ENCODE measurements at regions of chr2 and their contacts with region 1.

Region 1: DNA sequence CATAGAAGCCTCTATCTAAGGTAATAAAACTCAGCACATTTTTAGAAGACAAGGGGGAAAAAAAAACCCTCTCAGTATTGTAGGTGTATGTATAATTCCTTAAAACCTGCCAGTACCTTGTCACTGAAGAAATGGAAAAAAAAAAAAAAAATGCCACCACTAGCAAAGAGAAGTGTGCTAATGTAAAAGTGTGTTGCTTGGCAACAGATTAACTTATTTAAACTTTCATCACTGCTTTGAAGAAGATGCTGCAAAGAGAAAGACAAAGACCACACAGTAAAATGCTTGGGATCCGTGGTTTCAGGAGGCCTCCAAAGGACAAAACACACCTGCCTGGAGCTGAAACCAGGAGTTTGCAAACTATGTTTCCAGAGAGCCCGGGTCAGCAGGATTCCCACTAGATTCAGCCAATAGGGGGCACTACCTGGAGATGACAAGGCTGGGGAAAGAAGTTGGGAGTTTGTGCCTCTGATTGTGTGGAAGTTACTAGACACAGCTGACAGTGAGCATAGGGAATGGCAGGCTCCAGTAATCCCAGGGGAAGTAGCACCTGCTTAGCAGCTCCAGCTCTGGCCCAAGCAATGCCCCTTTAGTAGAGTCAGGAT is 169.1 kb upstream of the TRIB2 start:
- DNase-seq: no peak
- ATAC-seq: no peak
- H3K4me3 Mint-ChIP-seq: no peak overlapping the region
- H3K27ac Mint-ChIP-seq: no peak overlapping the region
- H3K4me1 Mint-ChIP-seq: no peaks in the 10 kb centered on the region
- H3K27me3 Mint-ChIP-seq: no peaks in the 10 kb centered on the region

Region 2: GRCh38 chr2:12534646-12535263 is 12.9 kb before region 1 on chr2:
- CTCF ChIA-PET with region 1: interaction called, 13 read pairs
- POLR2A ChIA-PET with region 1: no interaction called
- DNase-seq: no peak
- ATAC-seq: no peak
- H3K4me3 Mint-ChIP-seq: no peak overlapping the region
- H3K27ac Mint-ChIP-seq: no peak overlapping the region
- H3K4me1 Mint-ChIP-seq: peaks cover 10% of the 10 kb centered on the region
- H3K27me3 Mint-ChIP-seq: peaks cover 8% of the 10 kb centered on the region

Region 3: GRCh38 chr2:12579018-12579417 is 31.4 kb after region 1 on chr2:
- CTCF ChIA-PET with region 1: no interaction called
- POLR2A ChIA-PET with region 1: no interaction called
- DNase-seq: no peak
- ATAC-seq: no peak
- H3K4me3 Mint-ChIP-seq: no peak overlapping the region
- H3K27ac Mint-ChIP-seq: no peak overlapping the region
- H3K4me1 Mint-ChIP-seq: no peaks in the 10 kb centered on the region
- H3K27me3 Mint-ChIP-seq: no peaks in the 10 kb centered on the region

Region 4: DNA sequence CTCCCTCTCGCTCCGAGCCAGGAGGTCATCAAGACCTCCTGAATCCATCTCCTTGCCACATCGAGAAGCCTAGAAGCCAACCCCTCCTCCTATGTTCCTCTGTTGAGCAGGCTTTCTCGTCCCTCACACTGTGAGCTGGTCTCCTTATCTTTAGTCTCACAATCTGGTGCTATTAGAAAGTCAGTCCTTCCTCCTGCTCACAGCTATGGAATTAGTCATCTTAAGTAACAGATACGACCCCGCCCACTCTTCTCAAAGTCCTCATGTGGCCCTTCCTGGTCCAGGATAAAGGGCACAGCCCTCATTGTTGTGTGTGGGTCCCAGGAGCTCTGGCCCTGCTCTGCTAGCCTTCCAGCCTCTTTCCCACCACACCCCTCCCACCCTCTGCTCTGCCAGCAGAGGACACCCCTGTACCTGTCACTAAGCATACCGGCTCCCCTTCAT is 127.7 kb after region 1 on chr2:
- CTCF ChIA-PET with region 1: no interaction called
- POLR2A ChIA-PET with region 1: no interaction called
- DNase-seq: no peak
- ATAC-seq: no peak
- H3K4me3 Mint-ChIP-seq: no peak overlapping the region
- H3K27ac Mint-ChIP-seq: no peak overlapping the region
- H3K4me1 Mint-ChIP-seq: no peaks in the 10 kb centered on the region
- H3K27me3 Mint-ChIP-seq: no peaks in the 10 kb centered on the region

Measured in activated CD8-positive, alpha-beta T cell treated with anti-CD3 and anti-CD28 coated beads, Interleukin-2, amount 10 ng/mL, durations not matched to agents 7 days and 5 days (primary cell).